ENCODE measurements at regions of chr10 and their contacts with region 1.

Region 1: DNA sequence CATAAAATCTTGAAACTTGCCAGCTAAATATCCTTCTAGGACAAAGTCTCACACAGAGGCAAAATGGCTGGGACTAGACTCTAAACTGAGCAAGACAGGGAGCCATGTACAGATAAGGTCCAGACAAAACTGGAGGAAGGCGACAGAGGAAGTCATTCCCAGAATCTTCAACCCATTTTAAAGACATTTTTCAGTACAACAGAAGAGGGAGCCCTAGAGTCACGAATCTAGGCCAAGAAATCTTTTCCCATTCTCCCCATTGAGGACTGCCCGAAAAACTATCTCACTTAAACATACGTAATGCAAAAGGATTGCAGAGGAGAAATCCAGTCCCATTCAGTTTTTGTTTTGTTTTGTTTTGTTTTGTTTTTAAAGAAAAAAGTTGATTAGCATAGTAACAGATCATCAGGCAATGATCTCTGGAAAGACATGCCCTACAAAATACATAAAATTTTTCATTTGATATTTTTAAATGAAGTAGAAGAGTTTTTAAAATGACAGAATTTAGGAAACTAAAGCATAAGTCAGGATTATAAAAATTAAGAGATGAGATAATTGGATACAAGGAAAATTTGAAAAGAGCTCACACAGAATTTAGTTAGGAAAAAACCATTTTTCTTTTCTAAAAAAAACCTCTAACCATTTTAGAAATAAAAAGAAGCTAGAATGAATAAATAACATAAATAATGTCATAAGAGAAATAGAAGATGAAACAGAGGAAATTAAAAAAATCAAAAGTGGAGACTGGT is 16.9 kb upstream of the PRF1 start:
- DNase-seq: no peak
- H3K4me3 Mint-ChIP-seq: no peak overlapping the region
- H3K27ac Mint-ChIP-seq: no peak overlapping the region
- H3K4me1 Mint-ChIP-seq: peaks cover 17% of the 10 kb centered on the region
- H3K27me3 Mint-ChIP-seq: peaks cover 9% of the 10 kb centered on the region

Region 2: DNA sequence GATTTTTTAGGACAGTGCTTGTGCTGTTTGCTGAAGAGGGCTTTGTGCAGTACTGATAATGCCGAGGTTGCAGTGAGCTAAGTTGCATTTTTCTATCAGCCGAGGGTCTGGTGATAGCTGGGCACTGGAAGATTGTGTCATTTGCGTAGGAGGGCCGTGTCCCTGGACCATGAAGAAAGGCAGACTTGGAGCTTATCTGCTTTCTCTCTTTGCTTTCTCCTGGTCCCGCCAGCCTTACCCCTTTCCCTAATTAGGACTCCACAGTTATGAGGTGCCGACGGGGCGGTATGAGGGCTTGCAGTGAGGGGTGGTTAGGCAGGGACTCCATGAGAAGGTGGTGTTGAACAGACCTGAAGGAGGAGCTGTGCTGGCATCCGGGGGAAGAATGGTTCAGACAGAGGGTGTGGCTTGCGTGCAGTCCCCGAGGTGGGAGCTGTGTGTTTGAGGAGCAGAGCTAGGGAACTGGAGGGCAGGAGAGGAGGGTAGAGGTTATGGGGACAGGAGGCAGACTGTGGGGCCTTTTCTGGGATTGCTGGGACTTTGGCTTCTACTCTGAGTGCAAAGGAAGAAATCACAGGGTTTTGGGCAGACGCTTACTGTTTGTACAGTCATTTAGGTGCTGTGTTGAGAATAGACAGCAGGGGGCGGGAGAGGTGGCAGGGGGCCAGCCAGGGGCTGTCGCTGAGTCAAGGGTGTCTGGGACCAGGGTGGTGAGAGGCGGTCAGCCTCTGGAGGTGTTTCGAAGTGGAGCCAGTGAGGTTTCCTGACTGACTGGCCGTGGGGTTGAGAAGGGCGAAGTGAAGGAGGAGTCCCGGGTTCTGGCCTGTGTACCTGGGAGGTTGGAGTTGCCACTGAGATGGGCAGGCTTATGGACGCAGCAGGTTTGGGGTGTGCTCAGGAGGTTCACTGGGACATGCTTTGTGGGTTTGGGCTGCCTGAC is 60.3 kb before region 1 on chr10:
- CTCF ChIA-PET with region 1: interaction called, 4 read pairs
- POLR2A ChIA-PET with region 1: interaction called, 6 read pairs
- intact Hi-C with region 1: loop called (anchors 2 kb)
- DNase-seq: peak; percentile 83
- H3K4me3 Mint-ChIP-seq: peak overlapping the region; percentile 64
- H3K27ac Mint-ChIP-seq: peak overlapping the region; percentile 5
- H3K4me1 Mint-ChIP-seq: peaks cover 11% of the 10 kb centered on the region
- H3K27me3 Mint-ChIP-seq: no peaks in the 10 kb centered on the region

Region 3: DNA sequence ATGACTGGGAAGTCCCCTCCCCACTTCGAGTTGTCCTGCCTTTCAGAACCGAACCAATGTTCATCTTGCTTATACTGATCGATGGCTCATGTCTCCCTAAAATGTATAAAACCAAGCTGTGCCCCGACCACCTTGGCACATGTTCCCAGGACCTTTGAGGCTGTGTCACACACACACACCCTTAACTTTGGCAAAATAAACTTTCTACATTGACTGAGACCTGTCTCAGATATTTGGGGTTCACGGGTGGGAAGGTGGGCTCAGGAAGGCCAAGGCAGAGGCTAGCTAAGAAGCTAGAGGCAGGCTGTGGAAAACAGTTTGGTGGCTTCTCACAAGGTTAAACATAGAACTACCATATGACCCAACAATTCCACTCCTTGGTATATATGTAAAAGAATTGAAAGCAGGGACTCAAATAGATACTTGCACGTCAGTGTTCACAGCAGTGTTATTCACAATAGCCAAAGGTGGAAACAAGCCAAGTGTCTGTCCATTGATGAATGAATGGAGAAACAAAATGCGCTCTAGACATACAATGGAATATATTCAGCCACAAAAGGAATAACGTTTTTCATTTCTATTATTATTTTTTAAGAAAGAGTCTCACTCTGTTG is 32.3 kb before region 1 on chr10:
- CTCF ChIA-PET with region 1: interaction called, 5 read pairs
- POLR2A ChIA-PET with region 1: no interaction called
- intact Hi-C with region 1: loop called (anchors 2 kb)
- DNase-seq: peak; percentile 20
- H3K4me3 Mint-ChIP-seq: no peak overlapping the region
- H3K27ac Mint-ChIP-seq: peak overlapping the region; percentile 50
- H3K4me1 Mint-ChIP-seq: peaks cover 17% of the 10 kb centered on the region
- H3K27me3 Mint-ChIP-seq: peaks cover 21% of the 10 kb centered on the region

Region 4: GRCh38 chr10:70602665-70603448 is 16.6 kb before region 1 on chr10 and contains the start of gene PRF1:
- CTCF ChIA-PET with region 1: interaction called, 3 read pairs
- POLR2A ChIA-PET with region 1: no interaction called
- intact Hi-C with region 1: loop called (anchors 2 kb)
- DNase-seq: peak; percentile 87
- H3K4me3 Mint-ChIP-seq: peak within 1 kb of the TSS; percentile 79
- H3K27ac Mint-ChIP-seq: peak within 1 kb of the TSS; percentile 82
- H3K4me1 Mint-ChIP-seq: peaks cover 25% of the 10 kb centered on the region
- H3K27me3 Mint-ChIP-seq: no peaks in the 10 kb centered on the region
- total RNA-seq, gene PRF1: 32.4 to 32.6 TPM

Region 5: DNA sequence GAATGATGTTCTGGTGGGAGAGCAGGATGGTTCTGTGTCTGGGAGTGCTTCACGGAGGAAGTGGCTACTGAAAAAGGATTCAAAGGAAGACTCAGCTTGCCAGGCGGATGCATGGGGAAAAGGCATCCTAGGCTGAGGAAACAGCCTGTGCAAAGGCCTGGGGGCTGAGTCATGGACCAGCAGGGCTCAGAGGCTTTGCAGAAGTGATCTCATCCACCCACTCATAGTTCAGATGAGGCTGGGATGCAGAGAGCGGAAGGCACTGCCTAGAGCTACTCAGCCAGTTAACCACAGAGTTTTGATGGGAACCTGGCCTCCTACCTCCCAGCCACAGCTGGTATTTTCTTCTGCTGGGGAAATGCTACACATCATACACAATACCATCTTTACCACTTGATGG is 37.0 kb after region 1 on chr10:
- CTCF ChIA-PET with region 1: no interaction called
- POLR2A ChIA-PET with region 1: interaction called, 6 read pairs
- intact Hi-C with region 1: loop called (anchors 1 kb)
- DNase-seq: peak; percentile 82
- H3K4me3 Mint-ChIP-seq: no peak overlapping the region
- H3K27ac Mint-ChIP-seq: peak overlapping the region; percentile 56
- H3K4me1 Mint-ChIP-seq: peaks cover 14% of the 10 kb centered on the region
- H3K27me3 Mint-ChIP-seq: peaks cover 8% of the 10 kb centered on the region

Region 6: GRCh38 chr10:70758757-70759514 is 139.5 kb after region 1 on chr10:
- CTCF ChIA-PET with region 1: interaction called, 6 read pairs
- POLR2A ChIA-PET with region 1: interaction called, 3 read pairs
- intact Hi-C with region 1: loop called (anchors 1 kb)
- DNase-seq: peak; percentile 76
- H3K4me3 Mint-ChIP-seq: no peak overlapping the region
- H3K27ac Mint-ChIP-seq: no peak overlapping the region
- H3K4me1 Mint-ChIP-seq: peaks cover 7% of the 10 kb centered on the region
- H3K27me3 Mint-ChIP-seq: peaks cover 2% of the 10 kb centered on the region

Region 7: GRCh38 chr10:70931168-70931815 is 311.8 kb after region 1 on chr10:
- CTCF ChIA-PET with region 1: no interaction called
- POLR2A ChIA-PET with region 1: no interaction called
- intact Hi-C with region 1: no loop called
- DNase-seq: no peak
- H3K4me3 Mint-ChIP-seq: no peak overlapping the region
- H3K27ac Mint-ChIP-seq: no peak overlapping the region
- H3K4me1 Mint-ChIP-seq: no peaks in the 10 kb centered on the region
- H3K27me3 Mint-ChIP-seq: no peaks in the 10 kb centered on the region

Region 8: DNA sequence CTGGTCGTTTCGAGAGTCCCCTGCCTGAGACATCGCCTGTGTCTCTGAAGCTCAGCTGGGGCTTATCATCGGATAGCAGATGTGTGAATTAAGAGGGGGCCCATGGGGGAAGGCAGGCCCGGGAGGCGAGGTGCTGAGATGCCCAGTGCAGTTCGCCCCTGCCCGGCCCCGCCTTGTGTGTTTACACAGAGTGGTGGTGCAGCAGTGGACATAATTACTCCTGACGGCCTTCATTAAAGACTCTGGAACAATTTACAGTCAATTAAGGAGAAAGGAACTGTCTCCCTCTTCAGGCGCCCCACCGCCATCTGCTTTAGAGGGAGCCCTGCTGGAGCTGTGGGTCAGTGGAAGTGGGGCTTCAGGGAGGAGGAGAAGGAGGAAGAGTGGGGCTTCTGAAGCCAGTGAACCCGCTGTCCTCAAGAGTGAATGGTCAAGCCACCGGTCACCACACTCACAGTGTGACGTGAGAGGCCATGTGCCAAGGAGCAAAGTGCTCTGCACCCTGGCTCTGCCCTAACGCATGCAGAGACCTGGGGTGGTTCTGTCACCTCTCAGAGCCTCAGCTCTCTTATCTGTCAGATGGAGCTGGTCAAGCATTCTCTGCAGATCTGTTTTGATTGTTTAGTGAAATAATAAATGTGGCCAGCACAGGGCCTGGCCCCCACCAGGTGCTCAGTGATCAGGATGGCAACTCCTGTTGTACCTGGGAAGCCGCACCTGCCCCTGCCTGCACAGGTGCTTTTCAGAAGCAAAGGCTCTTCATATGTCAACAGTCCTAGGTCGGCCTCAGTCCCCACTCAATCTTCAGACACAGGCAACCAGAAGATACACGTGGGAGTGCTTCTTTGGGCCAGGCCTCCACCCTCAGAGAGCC is 842.9 kb after region 1 on chr10:
- CTCF ChIA-PET with region 1: no interaction called
- POLR2A ChIA-PET with region 1: no interaction called
- intact Hi-C with region 1: no loop called
- DNase-seq: no peak
- H3K4me3 Mint-ChIP-seq: no peak overlapping the region
- H3K27ac Mint-ChIP-seq: no peak overlapping the region
- H3K4me1 Mint-ChIP-seq: no peaks in the 10 kb centered on the region
- H3K27me3 Mint-ChIP-seq: no peaks in the 10 kb centered on the region